Activated CD4-positive, alpha-beta T cell treated with anti-CD3 and anti-CD28 coated beads for 36 hours (primary cell): ENCODE measurements at regions of chr7 and their contacts with region 1.

Region 1: DNA sequence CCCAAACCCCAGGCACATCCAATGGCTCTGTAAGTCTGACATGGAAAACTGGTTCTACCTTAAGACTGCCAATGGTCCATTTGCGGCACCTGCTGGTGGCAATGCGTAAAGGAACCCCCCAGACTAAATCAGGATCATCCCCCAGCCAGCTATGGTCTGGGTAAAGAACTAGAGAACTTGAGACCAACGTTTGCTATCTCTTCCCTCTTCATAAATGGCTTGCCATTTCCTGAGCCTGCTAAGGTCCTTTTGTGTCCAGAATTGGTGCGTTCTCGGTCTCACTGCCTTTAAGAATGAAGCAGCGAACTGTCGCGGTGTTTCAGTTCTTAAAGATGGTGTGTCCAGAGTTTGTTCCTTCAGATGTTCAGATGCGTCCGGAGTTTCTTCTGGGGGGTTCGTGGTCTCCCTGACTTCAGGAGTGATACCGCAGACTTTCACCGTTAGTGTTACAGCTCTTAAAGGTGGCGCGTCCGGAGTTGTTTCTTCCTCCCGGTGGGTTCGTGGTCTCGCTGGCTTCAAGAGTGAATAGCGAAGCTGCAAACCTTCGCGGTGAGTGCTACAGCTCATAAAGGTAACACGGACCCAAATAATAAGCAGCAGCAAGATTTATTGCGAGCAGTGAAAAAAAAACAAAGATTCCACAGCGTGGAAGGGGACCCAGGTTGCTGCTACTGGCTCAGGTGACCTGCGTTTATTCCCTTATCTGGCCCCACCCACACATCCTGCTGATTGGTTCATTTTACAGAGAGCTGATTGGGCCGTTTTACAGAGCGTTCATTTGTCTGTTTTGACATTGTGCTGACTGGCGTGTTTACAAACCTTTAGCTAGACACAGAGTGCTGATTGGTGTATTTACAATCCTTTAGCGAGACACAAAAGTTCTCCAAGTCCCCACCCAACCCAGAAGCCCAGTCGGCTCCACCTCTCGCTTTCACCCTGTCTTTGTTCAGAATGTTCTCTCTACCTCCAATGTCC is 95.4 kb downstream of the ELMO1 start:
- DNase-seq: peak; percentile 83
- ATAC-seq: peak; percentile 76
- H3K4me3 Mint-ChIP-seq: peak overlapping the region; percentile 86
- H3K27ac Mint-ChIP-seq: peak overlapping the region; percentile 99
- H3K4me1 Mint-ChIP-seq: peaks cover 87% of the 10 kb centered on the region
- H3K27me3 Mint-ChIP-seq: no peaks in the 10 kb centered on the region

Region 2: DNA sequence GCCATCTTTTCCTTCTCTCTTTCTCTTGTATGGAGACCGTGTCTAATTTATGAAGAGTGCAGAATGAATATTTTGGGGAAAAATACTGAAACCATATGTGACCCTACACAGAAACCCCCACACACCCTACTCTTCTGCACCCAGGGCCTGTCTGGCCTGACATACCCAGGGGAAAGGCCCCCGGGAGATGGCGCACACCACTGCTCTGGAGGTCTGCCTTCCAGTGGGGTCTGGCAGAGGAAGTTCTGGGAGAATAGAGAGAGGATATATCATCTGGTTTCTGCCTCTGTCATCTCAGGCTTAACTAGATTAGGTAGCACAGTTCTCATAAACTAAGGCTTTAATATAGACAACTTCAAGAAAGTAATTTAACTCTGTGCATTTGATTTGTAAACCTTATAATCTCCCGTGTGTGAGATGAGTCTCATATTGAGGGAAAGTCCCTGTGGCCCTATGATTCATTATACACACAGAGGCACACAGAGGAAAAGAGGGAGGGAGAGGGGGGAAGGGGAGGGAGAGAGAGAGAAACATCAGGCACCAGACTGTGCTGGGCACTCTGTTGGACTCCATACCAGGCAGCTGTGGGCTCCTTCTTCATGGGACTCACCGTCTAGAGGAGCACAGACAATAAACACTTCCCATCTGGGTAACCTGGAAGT is 752.3 kb before region 1 on chr7:
- CTCF ChIA-PET with region 1: no interaction called
- POLR2A ChIA-PET with region 1: no interaction called
- intact Hi-C with region 1: loop called in 1 of 2 experiments (anchors 5 kb)
- DNase-seq: peak; percentile 52
- ATAC-seq: peak; percentile 89
- H3K4me3 Mint-ChIP-seq: no peak overlapping the region
- H3K27ac Mint-ChIP-seq: peak overlapping the region; percentile 35
- H3K4me1 Mint-ChIP-seq: peaks cover 65% of the 10 kb centered on the region
- H3K27me3 Mint-ChIP-seq: no peaks in the 10 kb centered on the region

Region 3: DNA sequence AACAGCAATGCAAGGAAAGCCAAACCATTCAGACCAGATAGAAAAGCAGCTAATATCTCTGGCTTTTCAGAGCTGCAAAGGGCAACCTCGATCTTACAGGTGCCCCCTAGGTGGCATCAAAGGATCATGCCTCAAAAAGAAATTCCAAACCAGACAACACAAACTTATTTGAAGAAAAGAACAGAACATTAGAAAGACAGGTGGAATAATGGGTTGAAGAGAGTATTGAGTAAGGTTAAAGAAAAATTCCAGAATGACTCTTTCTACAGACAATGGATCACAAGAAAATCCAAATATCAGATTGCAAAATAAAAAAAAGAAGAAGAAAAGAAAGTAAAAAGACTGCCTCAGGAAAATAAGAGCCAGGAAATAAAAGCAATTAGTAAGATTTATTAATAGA is 118.3 kb before region 1 on chr7:
- CTCF ChIA-PET with region 1: interaction called, 68 read pairs
- POLR2A ChIA-PET with region 1: no interaction called
- intact Hi-C with region 1: loop called (anchors 2 kb)
- DNase-seq: peak; percentile 19
- ATAC-seq: no peak
- H3K4me3 Mint-ChIP-seq: no peak overlapping the region
- H3K27ac Mint-ChIP-seq: no peak overlapping the region
- H3K4me1 Mint-ChIP-seq: peaks cover 16% of the 10 kb centered on the region
- H3K27me3 Mint-ChIP-seq: no peaks in the 10 kb centered on the region

Region 4: DNA sequence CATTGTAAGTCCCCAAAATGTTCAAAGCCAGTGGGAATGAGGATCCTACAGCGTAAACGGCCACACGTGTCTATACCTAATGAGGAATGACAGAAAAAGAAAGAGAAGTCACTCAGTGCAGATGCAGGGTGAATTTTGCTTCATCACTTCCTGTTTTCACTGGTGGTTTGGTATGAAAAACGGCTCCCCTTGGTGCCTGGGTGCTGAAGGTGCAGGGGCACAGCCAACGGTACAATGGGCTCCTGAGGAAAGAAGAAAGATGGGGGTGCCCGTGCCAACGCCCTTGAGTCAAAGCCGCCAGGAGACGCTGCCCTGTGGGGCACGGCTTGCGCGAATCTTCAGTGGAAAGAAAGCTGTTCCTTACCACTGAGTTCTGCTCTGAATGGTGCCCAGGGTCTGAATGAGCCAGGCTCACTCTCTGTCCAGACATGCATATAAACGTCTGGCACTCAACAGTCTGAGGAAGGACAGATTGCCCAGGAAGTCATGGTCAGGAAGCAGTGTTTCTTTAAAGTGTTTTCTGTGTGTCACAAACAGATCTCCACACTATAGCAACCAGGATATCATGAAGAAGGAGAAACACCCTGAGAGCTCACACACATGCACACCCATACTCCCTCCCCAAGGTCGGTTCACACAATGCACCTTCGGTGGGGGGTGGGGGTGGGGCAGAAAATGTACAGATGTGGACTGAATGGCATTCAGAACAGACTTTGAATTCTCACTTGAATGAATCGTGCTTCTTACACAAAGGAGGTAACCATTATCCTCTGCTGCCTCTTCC is 10.4 kb before region 1 on chr7:
- CTCF ChIA-PET with region 1: interaction called, 50 read pairs
- POLR2A ChIA-PET with region 1: interaction called, 18 read pairs
- intact Hi-C with region 1: loop called (anchors 1 kb)
- DNase-seq: peak; percentile 85
- ATAC-seq: peak; percentile 83
- H3K4me3 Mint-ChIP-seq: peak overlapping the region; percentile 89
- H3K27ac Mint-ChIP-seq: peak overlapping the region; percentile 95
- H3K4me1 Mint-ChIP-seq: peaks cover 77% of the 10 kb centered on the region
- H3K27me3 Mint-ChIP-seq: no peaks in the 10 kb centered on the region

Region 5: GRCh38 chr7:37408291-37409228 is 55.3 kb after region 1 on chr7:
- CTCF ChIA-PET with region 1: interaction called, 4 read pairs
- POLR2A ChIA-PET with region 1: interaction called, 8 read pairs
- intact Hi-C with region 1: loop called (anchors 1 kb)
- DNase-seq: peak; percentile 49
- ATAC-seq: peak; percentile 55
- H3K4me3 Mint-ChIP-seq: peak overlapping the region; percentile 71
- H3K27ac Mint-ChIP-seq: peak overlapping the region; percentile 94
- H3K4me1 Mint-ChIP-seq: peaks cover 81% of the 10 kb centered on the region
- H3K27me3 Mint-ChIP-seq: no peaks in the 10 kb centered on the region

Region 6: GRCh38 chr7:37495574-37496184 is 142.4 kb after region 1 on chr7:
- CTCF ChIA-PET with region 1: interaction called, 8 read pairs
- POLR2A ChIA-PET with region 1: interaction called, 3 read pairs
- intact Hi-C with region 1: loop called (anchors 2 to 5 kb)
- DNase-seq: no peak
- ATAC-seq: no peak
- H3K4me3 Mint-ChIP-seq: no peak overlapping the region
- H3K27ac Mint-ChIP-seq: no peak overlapping the region
- H3K4me1 Mint-ChIP-seq: peaks cover 8% of the 10 kb centered on the region
- H3K27me3 Mint-ChIP-seq: no peaks in the 10 kb centered on the region